Mammary epithelial cell (primary cell): ENCODE measurements at regions of chrX and their contacts with region 1.

Region 1: GRCh38 chrX:134423615-134424014 is 36.4 kb upstream of the HPRT1 start:
- DNase-seq: peak; percentile 5
- H3K4me3 ChIP-seq: no peak overlapping the region
- H3K27ac ChIP-seq: no peak overlapping the region
- H3K4me1 ChIP-seq: no peaks in the 10 kb centered on the region
- H3K27me3 ChIP-seq: no peaks in the 10 kb centered on the region
- CTCF ChIP-seq: peak; percentile 40 to 55

Region 2: GRCh38 chrX:134294548-134294947 is 129.1 kb before region 1 on chrX:
- CTCF ChIA-PET with region 1: interaction called, 14 read pairs
- dilution Hi-C with region 1: no loop called
- in situ Hi-C with region 1: no loop called
- intact Hi-C with region 1: no loop called
- DNase-seq: no peak
- H3K4me3 ChIP-seq: no peak overlapping the region
- H3K27ac ChIP-seq: no peak overlapping the region
- H3K4me1 ChIP-seq: no peaks in the 10 kb centered on the region
- H3K27me3 ChIP-seq: peaks cover 2% of the 10 kb centered on the region
- CTCF ChIP-seq: peak; percentile 38 to 48

Region 3: DNA sequence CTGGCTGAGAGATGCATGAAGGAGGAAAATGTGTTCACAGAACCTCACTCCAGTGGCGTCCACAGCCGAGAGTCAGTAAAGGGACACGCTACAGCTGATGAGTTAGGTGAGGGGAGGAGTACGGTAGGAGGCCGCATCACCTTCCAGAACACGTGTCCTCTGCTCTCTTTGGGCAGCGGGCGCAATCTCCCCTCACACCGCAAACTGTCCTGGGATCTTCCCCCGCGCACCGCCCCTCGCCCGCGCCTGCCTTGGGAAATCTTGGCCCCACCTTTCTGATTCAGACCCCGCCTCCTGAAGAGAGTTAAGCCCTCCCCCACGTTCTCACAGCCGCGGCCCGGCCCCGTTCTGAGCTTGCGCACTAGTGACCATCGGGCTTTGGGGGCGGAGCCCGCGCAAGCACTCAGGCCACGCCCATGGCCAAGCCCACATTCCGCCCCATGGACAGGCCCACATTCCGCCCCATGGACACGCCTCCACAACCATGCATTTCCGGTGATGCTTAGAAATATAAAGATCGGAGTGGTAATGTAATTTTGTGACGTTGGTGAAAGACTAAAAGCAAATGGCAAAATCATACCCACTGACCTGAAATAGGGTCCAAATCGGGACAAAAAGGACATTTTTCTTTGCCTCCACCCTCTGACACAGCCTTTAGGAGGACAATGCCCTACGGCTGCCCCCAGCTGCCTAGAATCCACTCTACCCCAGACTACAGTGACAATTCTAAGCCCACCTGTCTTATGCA is 580.4 kb after region 1 on chrX:
- CTCF ChIA-PET with region 1: no interaction called
- dilution Hi-C with region 1: no loop called
- in situ Hi-C with region 1: no loop called
- intact Hi-C with region 1: loop called (anchors 1 kb)
- DNase-seq: peak; percentile 81
- H3K4me3 ChIP-seq: peak overlapping the region; percentile 38 to 56 (median 47)
- H3K27ac ChIP-seq: peak overlapping the region; percentile 52
- H3K4me1 ChIP-seq: no peaks in the 10 kb centered on the region
- H3K27me3 ChIP-seq: no peaks in the 10 kb centered on the region
- CTCF ChIP-seq: no peak